Activated T-helper 1 cell treated with anti-CD3 and anti-CD28 coated beads, Interleukin-12 subunit alpha, Interleukin-12 subunit beta, Interleukin-2, Interleukin-4 antibody, amounts not matched to agents 30 ng/mL and 10 ng/mL and 1 ng/mL, durations not matched to agents 14 hours and 24 hours and 36 hours (primary cell): ENCODE measurements at regions of chr16 and their contacts with region 1.

Region 1: DNA sequence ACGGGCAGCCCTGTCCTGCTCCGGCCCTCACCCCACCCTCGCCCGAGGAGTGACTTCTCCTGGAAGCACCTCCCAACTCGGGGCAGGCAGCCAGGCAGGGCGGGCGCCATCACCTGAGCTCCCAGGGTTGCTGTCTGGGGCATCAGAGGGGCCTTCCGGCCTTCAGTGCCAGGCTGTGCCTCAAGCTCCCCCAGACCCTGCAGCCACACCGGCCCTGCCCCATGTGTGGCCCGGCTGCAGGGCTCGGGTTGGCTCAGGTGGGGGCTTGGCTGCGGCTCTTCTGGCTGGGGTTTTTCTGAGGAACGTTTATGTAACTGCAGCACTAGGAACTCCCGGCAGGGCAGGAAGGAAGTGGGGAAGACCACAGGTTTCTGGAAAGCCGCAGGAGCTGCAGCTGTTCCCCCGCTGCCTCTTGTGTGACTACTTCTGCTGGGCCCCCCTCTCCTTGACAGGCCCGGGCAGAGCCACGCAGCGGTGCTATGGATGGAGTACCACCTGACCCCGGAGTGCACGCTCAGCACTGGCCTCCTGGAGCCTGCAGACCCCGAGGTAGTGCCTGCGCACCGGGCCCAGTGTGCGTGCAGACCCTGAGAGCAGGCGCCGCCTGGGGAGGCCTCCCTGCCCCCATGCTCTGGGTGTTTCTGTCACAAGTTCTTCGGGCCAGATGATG is 45.6 kb downstream of the PRMT7 start:
- DNase-seq: peak; percentile 73
- H3K4me3 Mint-ChIP-seq: peak overlapping the region; percentile 58
- H3K27ac Mint-ChIP-seq: peak overlapping the region; percentile 70
- H3K4me1 Mint-ChIP-seq: peaks cover 40% of the 10 kb centered on the region
- H3K27me3 Mint-ChIP-seq: peaks cover 2% of the 10 kb centered on the region

Region 2: DNA sequence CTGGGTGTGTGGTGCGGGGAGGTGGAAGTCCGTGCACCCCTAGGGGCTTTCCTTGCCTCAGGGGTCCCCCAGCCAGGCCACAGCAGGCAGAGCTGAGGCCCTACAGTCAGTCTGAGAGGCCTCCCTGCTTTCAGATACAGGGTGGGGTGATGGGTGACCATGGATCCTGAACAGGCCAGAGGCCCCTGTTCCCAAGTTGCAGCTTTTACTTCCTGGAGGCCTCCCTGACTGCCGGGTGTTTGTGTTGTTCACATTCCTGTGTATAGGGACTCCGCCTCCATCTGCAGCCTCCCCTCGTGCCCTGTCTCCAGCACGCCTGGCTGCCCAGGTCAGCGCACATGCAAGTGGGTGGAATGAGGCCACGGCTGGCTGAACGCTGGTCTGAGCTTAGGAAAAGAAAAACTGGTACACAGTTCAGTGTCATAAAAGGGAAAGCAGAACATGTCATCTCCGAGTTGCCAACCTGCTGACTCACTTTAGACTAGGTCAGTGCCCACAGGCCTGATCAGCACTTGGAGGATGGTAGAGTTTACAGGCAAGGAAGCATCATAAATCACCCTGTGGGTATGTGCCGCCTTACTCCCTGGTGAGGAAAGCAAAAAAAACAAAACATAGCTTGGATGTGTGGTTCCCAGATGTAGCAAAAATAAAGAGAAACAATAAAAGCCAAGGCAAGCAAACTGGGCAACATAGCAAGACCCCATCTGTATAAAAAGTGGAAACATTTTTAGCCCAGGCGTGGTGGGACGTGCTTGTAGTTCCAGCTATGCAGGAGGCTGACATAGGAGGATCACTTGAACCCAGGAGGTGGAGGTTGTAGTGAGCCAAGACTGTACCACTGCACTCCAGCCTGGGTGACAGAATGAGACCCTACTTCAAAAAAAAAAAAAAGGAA is 98.2 kb before region 1 on chr16:
- intact Hi-C with region 1: loop called (anchors 1 kb)
- DNase-seq: no peak
- H3K4me3 Mint-ChIP-seq: no peak overlapping the region
- H3K27ac Mint-ChIP-seq: no peak overlapping the region
- H3K4me1 Mint-ChIP-seq: peaks cover 17% of the 10 kb centered on the region
- H3K27me3 Mint-ChIP-seq: no peaks in the 10 kb centered on the region

Region 3: GRCh38 chr16:68448360-68448970 is 92.1 kb after region 1 on chr16 and contains the start of gene SMPD3:
- intact Hi-C with region 1: no loop called
- DNase-seq: peak; percentile 98
- H3K4me3 Mint-ChIP-seq: peak within 1 kb of the TSS; percentile 72
- H3K27ac Mint-ChIP-seq: peak within 1 kb of the TSS; percentile 3
- H3K4me1 Mint-ChIP-seq: peaks cover 5% of the 10 kb centered on the region
- H3K27me3 Mint-ChIP-seq: peaks cover 35% of the 10 kb centered on the region
- total RNA-seq, gene SMPD3: 0.49 and 0.61 TPM in 2 replicates